Heart right ventricle (tissue), 16 donors: ENCODE measurements at regions of chrX and their contacts with region 1.

Region 1: DNA sequence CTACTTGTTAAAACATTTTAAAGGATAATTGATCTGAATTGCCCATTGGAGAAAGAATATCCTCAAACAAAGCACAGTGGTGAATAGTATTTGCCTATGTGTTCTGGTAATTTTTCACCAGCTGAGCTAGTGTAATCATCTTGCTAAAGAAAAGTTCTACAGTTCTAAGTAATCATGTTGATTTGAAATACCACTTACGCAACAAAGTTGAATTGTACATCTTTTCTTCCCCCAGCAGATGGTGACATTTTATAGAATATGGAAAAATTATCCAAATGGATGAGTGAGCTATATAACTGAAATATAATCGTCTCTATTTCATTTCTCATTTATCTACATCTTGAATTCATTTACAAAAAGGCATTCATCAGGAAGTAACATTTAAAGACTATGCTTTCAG is 9.7 kb upstream of the ZNF674 start:
- DNase-seq: no peak
- ATAC-seq: no peak
- H3K4me3 ChIP-seq: no peak overlapping the region
- H3K27ac ChIP-seq: no peak overlapping the region
- H3K4me1 ChIP-seq: no peaks in the 10 kb centered on the region
- H3K27me3 ChIP-seq: peaks cover 0 to 4% (median 0%) of the 10 kb centered on the region in 7 donors
- CTCF ChIP-seq: peak in 6 of 9 donors; percentile 33 to 54 (median 44)

Region 2: DNA sequence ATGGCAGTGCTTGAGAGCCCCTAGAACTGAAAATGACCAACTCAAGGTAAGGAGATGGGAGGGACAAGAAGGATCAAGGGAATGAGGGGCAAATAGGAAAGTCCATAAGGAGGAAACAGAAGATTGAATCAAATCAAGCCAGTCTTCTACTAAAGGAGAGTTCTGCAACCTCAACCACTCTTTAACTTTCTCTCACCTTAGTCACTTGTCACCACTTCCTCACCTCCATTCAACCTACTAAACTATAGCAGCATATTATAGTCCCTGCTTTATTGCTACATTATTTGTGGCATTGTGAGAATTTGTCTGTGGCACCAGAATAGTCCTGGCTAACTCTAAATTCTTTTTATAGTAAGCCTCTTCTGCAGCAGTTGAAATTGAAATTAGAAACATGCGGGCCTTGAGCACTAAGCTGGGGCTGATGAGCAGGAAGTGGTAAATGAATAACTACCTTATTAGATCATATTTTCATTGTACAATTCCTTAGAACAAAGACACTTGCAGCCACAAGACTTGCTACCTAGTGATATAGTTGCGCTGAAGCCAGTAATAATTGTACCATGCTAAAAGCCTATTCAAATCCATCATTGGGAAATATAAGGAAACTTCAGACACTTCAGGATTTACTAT is 346.6 kb before region 1 on chrX:
- intact Hi-C with region 1: no loop called
- DNase-seq: no peak
- ATAC-seq: no peak
- H3K4me3 ChIP-seq: no peak overlapping the region
- H3K27ac ChIP-seq: peak overlapping the region in 1 of 10 donors; percentile 2
- H3K4me1 ChIP-seq: no peaks in the 10 kb centered on the region
- H3K27me3 ChIP-seq: peaks cover 0 to 11% (median 0%) of the 10 kb centered on the region in 7 donors
- CTCF ChIP-seq: no peak

Region 3: GRCh38 chrX:46573331-46573891 is 18.5 kb after region 1 on chrX and contains the start of gene CHST7:
- intact Hi-C with region 1: no loop called
- DNase-seq: peak; percentile 55 to 79
- ATAC-seq: peak; percentile 68 to 89 (median 84)
- H3K4me3 ChIP-seq: peak within 1 kb of the TSS; percentile 53 to 78 (median 70)
- H3K27ac ChIP-seq: peak within 1 kb of the TSS; percentile 47 to 84 (median 76)
- H3K4me1 ChIP-seq: peaks cover 0 to 32% (median 17%) of the 10 kb centered on the region in 9 donors
- H3K27me3 ChIP-seq: no peaks in the 10 kb centered on the region
- CTCF ChIP-seq: peak in 6 of 9 donors; percentile 20 to 55 (median 36)
- total RNA-seq, gene CHST7: 3.5 to 23.0 (median 8.6) TPM

Region 4: DNA sequence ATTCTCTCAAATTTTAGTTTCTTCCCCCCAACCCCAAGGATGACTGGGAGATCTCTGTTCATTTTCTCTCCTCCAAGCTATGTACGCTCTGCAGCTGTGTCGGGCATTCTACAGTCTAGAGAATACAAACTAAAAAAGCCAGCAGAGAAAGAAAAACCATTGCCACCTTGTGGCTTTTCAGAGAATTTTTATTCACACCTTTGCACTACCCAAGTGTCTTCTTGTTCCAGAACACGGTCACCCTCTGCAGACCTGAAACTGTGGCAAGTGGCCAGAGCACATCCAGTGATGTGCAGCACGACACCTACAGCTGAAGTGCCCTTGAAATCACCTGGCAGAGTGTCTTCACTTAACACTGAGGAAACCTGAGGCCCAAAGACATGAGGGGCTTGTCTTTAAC is 87.2 kb after region 1 on chrX:
- intact Hi-C with region 1: loop called in 3 of 10 experiments (anchors 5 kb)
- DNase-seq: peak in 1 of 2 donors; percentile 7
- ATAC-seq: peak; percentile 67 to 89 (median 81)
- H3K4me3 ChIP-seq: no peak overlapping the region
- H3K27ac ChIP-seq: no peak overlapping the region
- H3K4me1 ChIP-seq: peaks cover 0 to 8% (median 0%) of the 10 kb centered on the region in 9 donors
- H3K27me3 ChIP-seq: peaks cover 0 to 14% (median 0%) of the 10 kb centered on the region in 7 donors
- CTCF ChIP-seq: peak; percentile 21 to 65 (median 50)

Region 5: DNA sequence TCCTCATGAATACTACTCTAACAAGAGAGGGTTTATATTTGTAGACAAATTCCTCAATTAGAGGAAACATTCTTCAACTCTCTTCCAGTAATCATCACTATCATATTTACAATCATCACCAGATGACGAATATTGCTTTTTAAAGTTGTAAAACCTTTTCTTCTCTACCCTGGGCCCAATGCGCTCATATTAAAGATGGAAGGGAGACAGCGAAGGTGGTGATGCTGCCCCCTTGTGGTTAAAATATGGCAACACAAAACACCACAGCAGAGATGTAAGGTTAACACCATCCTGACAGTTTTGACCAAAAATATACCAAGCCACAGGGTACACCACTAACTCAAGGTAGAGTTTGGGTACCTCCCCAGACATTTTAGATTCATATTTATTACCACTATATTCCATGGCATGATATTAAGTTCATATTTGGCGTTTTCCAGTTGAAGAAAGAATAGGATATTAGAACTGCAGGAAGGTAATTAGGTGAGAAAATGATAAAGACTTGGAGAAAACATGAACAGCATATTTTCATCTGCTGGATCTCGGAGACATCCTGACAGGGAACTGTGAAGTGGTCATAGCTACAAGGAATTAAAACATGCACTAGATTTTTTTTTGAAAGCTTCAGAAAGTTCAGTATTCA is 131.2 kb after region 1 on chrX:
- intact Hi-C with region 1: loop called in 7 of 10 experiments (anchors 5 to 10 kb)
- DNase-seq: peak in 1 of 2 donors; percentile 17
- ATAC-seq: peak in 4 of 8 donors; percentile 52 to 63 (median 58)
- H3K4me3 ChIP-seq: no peak overlapping the region
- H3K27ac ChIP-seq: no peak overlapping the region
- H3K4me1 ChIP-seq: peaks cover 0 to 4% (median 0%) of the 10 kb centered on the region in 9 donors
- H3K27me3 ChIP-seq: peaks cover 0 to 6% (median 0%) of the 10 kb centered on the region in 7 donors
- CTCF ChIP-seq: peak; percentile 49 to 79 (median 68)

Region 6: GRCh38 chrX:46796574-46797191 is 241.7 kb after region 1 on chrX:
- intact Hi-C with region 1: loop called in 1 of 10 experiments (anchors 5 kb)
- DNase-seq: peak; percentile 65 to 66
- ATAC-seq: peak in 7 of 8 donors; percentile 49 to 83 (median 67)
- H3K4me3 ChIP-seq: no peak overlapping the region
- H3K27ac ChIP-seq: no peak overlapping the region
- H3K4me1 ChIP-seq: peaks cover 0 to 16% (median 0%) of the 10 kb centered on the region in 9 donors
- H3K27me3 ChIP-seq: peaks cover 0 to 17% (median 0%) of the 10 kb centered on the region in 7 donors
- CTCF ChIP-seq: peak; percentile 42 to 81 (median 72)